Right cardiac atrium (tissue), 5 donors: ENCODE measurements at regions of chr1 and their contacts with region 1.

Region 1: DNA sequence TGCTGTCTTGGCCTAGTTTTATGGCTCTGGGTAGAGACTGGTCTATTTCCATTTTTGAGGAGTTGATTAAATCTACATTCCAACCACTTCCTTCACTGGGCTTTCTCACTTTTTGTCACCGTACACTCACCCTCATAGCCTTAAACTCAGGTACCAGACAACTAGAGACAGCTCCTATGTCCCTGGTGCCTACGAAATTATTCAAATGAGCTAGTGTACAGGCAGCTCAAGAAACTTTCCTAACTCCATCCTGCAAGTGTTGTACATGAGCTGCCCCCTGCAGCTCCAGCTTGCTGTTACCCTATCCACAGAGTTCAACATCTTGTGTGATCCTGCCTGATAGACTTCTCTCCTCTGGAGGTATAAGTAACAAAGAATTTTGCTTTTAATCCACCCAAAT is 704.8 kb upstream of the RGS18 start:
- DNase-seq: no peak
- ATAC-seq: no peak
- H3K4me3 ChIP-seq: no peak overlapping the region
- H3K27ac ChIP-seq: no peak overlapping the region
- H3K4me1 ChIP-seq: no peaks in the 10 kb centered on the region
- H3K27me3 ChIP-seq: no peaks in the 10 kb centered on the region

Region 2: GRCh38 chr1:191290441-191290840 is 163.1 kb before region 1 on chr1:
- intact Hi-C with region 1: loop called in 1 of 4 experiments (anchors 10 kb)
- DNase-seq: no peak
- ATAC-seq: no peak
- H3K4me3 ChIP-seq: no peak overlapping the region
- H3K27ac ChIP-seq: no peak overlapping the region
- H3K4me1 ChIP-seq: no peaks in the 10 kb centered on the region
- H3K27me3 ChIP-seq: no peaks in the 10 kb centered on the region

Region 3: DNA sequence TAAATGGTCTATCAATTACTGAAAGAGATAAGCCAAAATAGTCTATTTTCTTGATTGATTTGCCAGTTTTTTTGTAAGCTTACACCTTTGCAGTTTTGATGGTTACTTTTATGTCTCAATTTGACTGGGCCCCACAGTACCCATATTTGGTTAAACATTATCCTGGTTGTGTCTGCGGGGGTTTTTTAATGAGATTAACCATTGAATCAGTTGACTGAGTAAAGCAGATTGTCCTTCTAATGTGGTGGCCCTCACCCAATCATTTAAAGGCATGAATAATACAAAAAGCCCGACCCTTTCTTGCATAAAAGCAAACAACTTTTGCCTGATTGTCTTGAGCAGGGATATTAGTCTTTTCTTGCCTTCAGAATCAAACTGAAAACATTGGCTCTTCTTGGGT is 54.7 kb after region 1 on chr1:
- intact Hi-C with region 1: no loop called
- DNase-seq: no peak
- ATAC-seq: no peak
- H3K4me3 ChIP-seq: no peak overlapping the region
- H3K27ac ChIP-seq: no peak overlapping the region
- H3K4me1 ChIP-seq: no peaks in the 10 kb centered on the region
- H3K27me3 ChIP-seq: no peaks in the 10 kb centered on the region